ENCODE measurements at regions of chr6 and their contacts with region 1.

Region 1: GRCh38 chr6:131744432-131745287 is 33.8 kb upstream of the CTAGE9 start:
- DNase-seq: no peak
- H3K4me3 ChIP-seq: no peak overlapping the region
- H3K27ac ChIP-seq: no peak overlapping the region
- H3K4me1 ChIP-seq: no peaks in the 10 kb centered on the region
- H3K27me3 ChIP-seq: no peaks in the 10 kb centered on the region
- CTCF ChIP-seq: no peak

Region 2: GRCh38 chr6:131828100-131828499 is 83.4 kb after region 1 on chr6:
- CTCF ChIA-PET with region 1: no interaction called
- dilution Hi-C with region 1: loop called (anchors 5 kb)
- in situ Hi-C with region 1: no loop called
- intact Hi-C with region 1: no loop called
- DNase-seq: no peak
- H3K4me3 ChIP-seq: no peak overlapping the region
- H3K27ac ChIP-seq: no peak overlapping the region
- H3K4me1 ChIP-seq: no peaks in the 10 kb centered on the region
- H3K27me3 ChIP-seq: peaks cover 4% of the 10 kb centered on the region
- CTCF ChIP-seq: no peak

Measured in mammary epithelial cell (primary cell).